Activated CD8-positive, alpha-beta T cell treated with anti-CD3 and anti-CD28 coated beads, Interleukin-2, amount 10 ng/mL, durations not matched to agents 7 days and 5 days (primary cell): ENCODE measurements at regions of chr12 and their contacts with region 1.

Region 1: DNA sequence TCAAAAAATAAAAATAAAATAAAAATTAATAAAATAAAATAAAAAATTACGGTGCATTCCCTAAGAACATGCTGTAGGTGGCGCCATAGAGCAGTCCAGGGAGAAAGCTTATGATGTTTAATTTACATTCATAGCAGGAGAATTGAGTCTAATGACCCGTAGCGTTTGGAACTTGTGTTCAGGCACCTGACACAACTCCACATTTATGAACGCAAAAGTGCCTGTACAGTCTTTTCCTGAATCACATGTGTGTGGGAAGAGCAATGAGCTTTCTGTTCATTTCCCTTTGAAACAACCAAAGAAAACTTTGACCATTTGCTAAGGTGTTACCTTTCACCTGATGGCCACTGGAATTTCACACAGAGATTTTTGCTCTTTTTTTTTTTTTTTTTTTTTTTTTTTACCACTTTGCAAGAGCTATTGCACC is 60.6 kb upstream of the KCNA1 start:
- DNase-seq: peak; percentile 56
- ATAC-seq: no peak
- H3K4me3 Mint-ChIP-seq: no peak overlapping the region
- H3K27ac Mint-ChIP-seq: no peak overlapping the region
- H3K4me1 Mint-ChIP-seq: peaks cover 2% of the 10 kb centered on the region
- H3K27me3 Mint-ChIP-seq: peaks cover 18% of the 10 kb centered on the region

Region 2: GRCh38 chr12:4191642-4192041 is 657.5 kb before region 1 on chr12:
- CTCF ChIA-PET with region 1: no interaction called
- POLR2A ChIA-PET with region 1: no interaction called
- DNase-seq: no peak
- ATAC-seq: no peak
- H3K4me3 Mint-ChIP-seq: no peak overlapping the region
- H3K27ac Mint-ChIP-seq: no peak overlapping the region
- H3K4me1 Mint-ChIP-seq: peaks cover 12% of the 10 kb centered on the region
- H3K27me3 Mint-ChIP-seq: no peaks in the 10 kb centered on the region

Region 3: GRCh38 chr12:4807116-4807783 is 41.9 kb before region 1 on chr12:
- CTCF ChIA-PET with region 1: interaction called, 10 read pairs
- POLR2A ChIA-PET with region 1: no interaction called
- DNase-seq: peak; percentile 45
- ATAC-seq: peak; percentile 65
- H3K4me3 Mint-ChIP-seq: peak overlapping the region; percentile 6
- H3K27ac Mint-ChIP-seq: peak overlapping the region; percentile 32
- H3K4me1 Mint-ChIP-seq: peaks cover 44% of the 10 kb centered on the region
- H3K27me3 Mint-ChIP-seq: peaks cover 25% of the 10 kb centered on the region

Region 4: DNA sequence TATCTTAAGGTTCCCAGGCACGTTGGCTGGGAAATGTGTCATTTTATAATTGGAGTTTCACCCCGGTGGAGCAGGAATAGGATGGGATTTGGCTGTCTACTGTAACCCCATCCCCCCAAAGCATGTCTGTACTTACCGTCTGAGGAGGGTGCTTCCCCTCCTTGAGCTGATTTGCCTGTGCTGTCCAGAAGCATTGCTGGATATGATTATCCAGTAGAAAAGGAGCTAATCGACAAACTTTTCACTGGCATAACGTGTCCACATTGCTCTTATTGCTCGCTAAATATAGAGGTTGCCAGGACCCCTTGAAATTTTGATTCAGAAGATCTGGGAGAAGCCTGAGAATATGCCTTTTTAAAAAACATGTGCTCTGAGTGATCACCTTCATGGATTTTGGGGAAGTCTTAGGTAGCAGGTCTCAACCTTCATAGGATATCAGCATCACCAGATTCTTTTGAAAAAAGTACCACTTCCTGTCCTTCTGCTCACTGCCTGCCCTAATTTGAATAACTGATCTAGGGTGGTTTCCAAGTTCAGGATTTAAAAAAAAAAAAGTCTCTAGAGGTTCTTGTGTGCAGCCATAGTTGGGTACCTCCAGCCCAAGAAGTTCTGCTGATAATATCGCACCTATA is 19.9 kb before region 1 on chr12:
- CTCF ChIA-PET with region 1: interaction called, 78 read pairs
- POLR2A ChIA-PET with region 1: no interaction called
- DNase-seq: peak; percentile 43
- ATAC-seq: peak; percentile 73
- H3K4me3 Mint-ChIP-seq: peak overlapping the region; percentile 79
- H3K27ac Mint-ChIP-seq: peak overlapping the region; percentile 94
- H3K4me1 Mint-ChIP-seq: peaks cover 81% of the 10 kb centered on the region
- H3K27me3 Mint-ChIP-seq: no peaks in the 10 kb centered on the region